ENCODE measurements at regions of chr6 and their contacts with region 1.

Region 1: GRCh38 chr6:127120787-127121636 is 2.5 kb downstream of the RSPO3 start:
- DNase-seq: peak; percentile 61 to 98 (median 82)

Region 2: DNA sequence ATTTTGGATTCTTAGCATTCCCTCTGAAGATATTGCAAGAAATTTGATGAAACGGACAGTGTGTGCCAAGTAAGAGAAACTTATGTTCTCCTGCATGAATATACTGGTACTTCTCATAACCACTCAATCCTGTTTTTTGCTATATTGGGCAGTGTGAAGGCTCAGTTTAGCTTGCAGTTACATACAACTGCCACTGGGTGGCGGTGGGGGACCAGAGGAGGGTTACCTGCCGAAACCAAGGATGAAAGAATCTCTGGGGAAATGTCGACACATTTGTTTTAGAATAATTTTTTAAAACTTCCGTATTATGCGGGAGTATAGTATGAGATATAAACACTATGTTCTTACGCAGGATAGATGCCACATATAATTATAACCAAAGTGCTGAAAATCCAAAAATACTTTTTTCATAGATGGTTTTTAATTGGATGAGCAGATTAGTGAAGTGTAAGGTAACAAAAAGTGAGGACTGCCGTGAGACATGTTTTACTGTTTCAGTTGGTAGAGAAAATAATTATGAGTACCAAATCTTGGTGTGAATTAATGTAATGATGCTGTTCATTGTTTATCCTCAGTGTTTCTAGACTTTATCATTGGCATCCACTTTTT is 1124.9 kb before region 1 on chr6:
- intact Hi-C with region 1: loop called (anchors 2 kb)
- DNase-seq: peak; percentile 41 to 94 (median 66)

Region 3: GRCh38 chr6:126033696-126034095 is 1087.3 kb before region 1 on chr6:
- intact Hi-C with region 1: loop called (anchors 5 kb)
- DNase-seq: peak in 3 of 10 donors; percentile 6 to 11 (median 6)

Region 4: DNA sequence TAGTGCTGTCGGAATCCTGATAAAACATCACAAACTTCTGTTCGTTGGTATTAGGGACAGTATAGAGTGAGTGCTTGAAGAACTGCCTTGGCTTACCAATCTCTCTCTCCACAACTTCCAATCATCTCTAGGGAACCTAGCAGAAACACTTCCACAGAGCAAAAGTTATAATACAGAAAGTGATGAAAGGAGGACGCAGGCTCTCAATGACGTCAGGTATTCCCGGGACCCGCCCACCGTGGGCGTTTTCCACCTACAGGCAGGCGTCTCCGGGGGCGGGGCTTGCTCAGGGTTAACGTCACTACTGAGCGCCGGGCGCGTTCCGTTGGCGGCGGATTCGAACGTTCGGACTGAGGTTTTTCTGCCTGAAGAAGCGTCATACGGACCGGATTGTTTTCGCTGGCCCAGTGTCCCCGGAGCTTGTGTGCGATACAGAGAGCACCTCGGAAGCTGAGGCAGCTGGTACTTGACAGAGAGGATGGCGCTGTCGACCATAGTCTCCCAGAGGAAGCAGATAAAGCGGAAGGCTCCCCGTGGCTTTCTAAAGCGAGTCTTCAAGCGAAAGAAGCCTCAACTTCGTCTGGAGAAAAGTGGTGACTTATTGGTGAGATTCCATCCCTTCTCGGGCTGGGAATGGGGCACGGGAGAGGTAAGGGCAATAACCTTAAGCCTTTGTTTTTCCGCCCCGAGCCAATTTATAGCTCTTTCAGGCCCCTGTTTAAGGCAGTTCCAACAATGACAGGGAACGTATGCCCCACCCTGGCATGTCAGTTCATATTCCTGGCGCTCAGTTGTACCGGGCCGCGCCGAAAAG is 781.0 kb before region 1 on chr6 and contains the start of gene CENPW:
- intact Hi-C with region 1: loop called (anchors 10 kb)
- DNase-seq: peak; percentile 68 to 97 (median 80)

Region 5: GRCh38 chr6:126804332-126805064 is 316.5 kb before region 1 on chr6:
- intact Hi-C with region 1: loop called (anchors 10 kb)
- DNase-seq: peak in 1 of 10 donors; percentile 12

Region 6: DNA sequence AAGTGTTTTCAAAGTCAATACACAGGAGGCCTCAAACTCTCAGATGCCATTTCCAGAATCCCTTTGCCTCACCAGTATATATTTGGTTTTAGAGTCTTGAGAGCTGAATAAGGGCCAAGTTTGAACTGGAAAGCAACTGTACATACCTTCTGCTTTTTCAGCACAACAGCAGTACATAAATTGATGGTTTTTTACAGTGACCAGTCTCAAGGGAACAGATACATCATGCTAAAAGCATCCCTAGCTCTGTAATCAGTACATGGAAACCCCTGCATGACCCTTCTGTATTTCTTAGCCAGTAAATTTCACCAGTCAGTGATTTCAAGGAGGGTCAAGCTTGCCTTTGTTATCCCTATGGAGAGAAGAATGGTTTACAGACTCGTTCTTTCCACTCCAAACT is 263.0 kb after region 1 on chr6:
- intact Hi-C with region 1: no loop called
- DNase-seq: no peak